Natural killer cell (primary cell): ENCODE measurements at regions of chr2 and their contacts with region 1.

Region 1: DNA sequence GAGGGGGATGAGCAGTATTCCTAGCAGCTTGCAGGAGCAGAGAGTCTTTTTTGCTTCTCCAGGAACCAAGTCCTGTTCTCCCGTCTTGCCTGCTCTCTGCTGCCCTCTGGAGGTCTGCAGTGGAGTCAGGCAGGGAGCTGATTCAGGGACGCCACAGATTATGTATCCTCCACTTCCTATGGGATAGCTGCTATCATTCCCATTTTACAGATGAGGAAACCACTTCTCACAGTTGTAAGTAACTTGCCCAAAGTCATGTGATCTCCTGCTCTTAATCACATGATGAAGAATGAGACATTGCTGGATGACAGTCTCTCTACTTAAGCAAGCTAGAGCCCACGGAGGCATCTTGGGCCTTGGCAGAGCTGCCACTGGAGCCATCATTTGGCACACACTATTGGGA is 8.3 kb downstream of the SLC4A5 start:
- DNase-seq: peak; percentile 71 to 89
- ATAC-seq: peak; percentile 78 to 90 (median 85)
- H3K4me3 ChIP-seq: no peak overlapping the region
- H3K4me3 Mint-ChIP-seq: no peak overlapping the region
- H3K27ac ChIP-seq: no peak overlapping the region
- H3K27ac Mint-ChIP-seq: no peak overlapping the region
- H3K4me1 ChIP-seq: peaks cover 2% of the 10 kb centered on the region
- H3K4me1 Mint-ChIP-seq: no peaks in the 10 kb centered on the region
- H3K27me3 ChIP-seq: no peaks in the 10 kb centered on the region
- H3K27me3 Mint-ChIP-seq: no peaks in the 10 kb centered on the region
- CTCF ChIP-seq: peak; percentile 99

Region 2: GRCh38 chr2:74250189-74250631 is 84.7 kb before region 1 on chr2:
- intact Hi-C with region 1: loop called (anchors 1 kb)
- DNase-seq: peak; percentile 46 to 83
- ATAC-seq: peak in 2 of 3 donors; percentile 63 to 68
- H3K4me3 ChIP-seq: no peak overlapping the region
- H3K4me3 Mint-ChIP-seq: no peak overlapping the region
- H3K27ac ChIP-seq: no peak overlapping the region
- H3K27ac Mint-ChIP-seq: no peak overlapping the region
- H3K4me1 ChIP-seq: peaks cover 5% of the 10 kb centered on the region
- H3K4me1 Mint-ChIP-seq: peaks cover 0 to 3% of the 10 kb centered on the region in 2 donors
- H3K27me3 ChIP-seq: no peaks in the 10 kb centered on the region
- H3K27me3 Mint-ChIP-seq: no peaks in the 10 kb centered on the region
- CTCF ChIP-seq: peak; percentile 81